OCI-LY7 (cell line): ENCODE measurements at regions of chr2 and their contacts with region 1.

Region 1: DNA sequence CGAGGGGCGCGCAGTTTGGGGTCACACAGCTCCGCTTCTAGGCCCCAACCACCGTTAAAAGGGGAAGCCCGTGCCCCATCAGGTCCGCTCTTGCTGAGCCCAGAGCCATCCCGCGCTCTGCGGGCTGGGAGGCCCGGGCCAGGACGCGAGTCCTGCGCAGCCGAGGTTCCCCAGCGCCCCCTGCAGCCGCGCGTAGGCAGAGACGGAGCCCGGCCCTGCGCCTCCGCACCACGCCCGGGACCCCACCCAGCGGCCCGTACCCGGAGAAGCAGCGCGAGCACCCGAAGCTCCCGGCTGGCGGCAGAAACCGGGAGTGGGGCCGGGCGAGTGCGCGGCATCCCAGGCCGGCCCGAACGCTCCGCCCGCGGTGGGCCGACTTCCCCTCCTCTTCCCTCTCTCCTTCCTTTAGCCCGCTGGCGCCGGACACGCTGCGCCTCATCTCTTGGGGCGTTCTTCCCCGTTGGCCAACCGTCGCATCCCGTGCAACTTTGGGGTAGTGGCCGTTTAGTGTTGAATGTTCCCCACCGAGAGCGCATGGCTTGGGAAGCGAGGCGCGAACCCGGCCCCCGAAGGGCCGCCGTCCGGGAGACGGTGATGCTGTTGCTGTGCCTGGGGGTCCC is at the start of gene ITGA4:
- DNase-seq: peak; percentile 93
- H3K4me3 ChIP-seq: peak within 1 kb of the TSS; percentile 91
- H3K27ac ChIP-seq: peak within 1 kb of the TSS; percentile 95
- H3K4me1 ChIP-seq: peaks cover 44% of the 10 kb centered on the region
- CTCF ChIP-seq: peak; percentile 85
- total RNA-seq, gene ITGA4: 55.1 and 61.8 TPM in 2 replicates

Region 2: DNA sequence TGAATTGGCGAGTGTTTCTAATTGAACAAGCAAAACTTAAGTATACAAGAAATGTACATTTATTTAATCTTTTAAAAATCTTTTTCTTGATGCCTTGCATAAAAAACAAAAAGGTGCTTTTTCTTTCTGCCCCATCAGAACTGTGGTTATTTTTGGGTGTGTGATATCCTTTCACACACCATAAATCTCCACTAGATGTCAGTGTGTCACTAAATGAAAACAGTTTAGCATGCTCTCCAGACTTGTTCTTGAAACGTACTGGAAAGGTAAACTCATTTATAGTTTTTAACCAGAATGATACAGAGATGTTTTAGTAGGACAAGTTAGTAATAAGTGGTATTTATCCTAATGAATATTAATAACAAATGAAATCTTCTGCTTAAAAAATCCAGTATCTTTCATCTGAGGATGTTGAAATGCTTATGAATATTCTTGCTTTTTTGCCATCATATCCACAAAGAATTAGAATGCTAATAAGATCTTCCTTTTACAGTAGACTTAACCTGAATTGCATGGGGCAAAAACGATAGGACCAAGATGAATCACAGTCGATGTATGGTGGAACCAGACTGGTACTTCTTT is 380.0 kb before region 1 on chr2:
- CTCF ChIA-PET with region 1: no interaction called
- POLR2A ChIA-PET with region 1: no interaction called
- intact Hi-C with region 1: loop called (anchors 5 kb)
- DNase-seq: peak; percentile 72
- H3K4me3 ChIP-seq: no peak overlapping the region
- H3K27ac ChIP-seq: no peak overlapping the region
- H3K4me1 ChIP-seq: no peaks in the 10 kb centered on the region
- CTCF ChIP-seq: peak; percentile 94

Region 3: GRCh38 chr2:181152226-181152625 is 305.0 kb before region 1 on chr2:
- CTCF ChIA-PET with region 1: interaction called, 11 read pairs
- POLR2A ChIA-PET with region 1: no interaction called
- intact Hi-C with region 1: no loop called
- DNase-seq: no peak
- H3K4me3 ChIP-seq: no peak overlapping the region
- H3K27ac ChIP-seq: no peak overlapping the region
- H3K4me1 ChIP-seq: no peaks in the 10 kb centered on the region
- CTCF ChIP-seq: no peak

Region 4: DNA sequence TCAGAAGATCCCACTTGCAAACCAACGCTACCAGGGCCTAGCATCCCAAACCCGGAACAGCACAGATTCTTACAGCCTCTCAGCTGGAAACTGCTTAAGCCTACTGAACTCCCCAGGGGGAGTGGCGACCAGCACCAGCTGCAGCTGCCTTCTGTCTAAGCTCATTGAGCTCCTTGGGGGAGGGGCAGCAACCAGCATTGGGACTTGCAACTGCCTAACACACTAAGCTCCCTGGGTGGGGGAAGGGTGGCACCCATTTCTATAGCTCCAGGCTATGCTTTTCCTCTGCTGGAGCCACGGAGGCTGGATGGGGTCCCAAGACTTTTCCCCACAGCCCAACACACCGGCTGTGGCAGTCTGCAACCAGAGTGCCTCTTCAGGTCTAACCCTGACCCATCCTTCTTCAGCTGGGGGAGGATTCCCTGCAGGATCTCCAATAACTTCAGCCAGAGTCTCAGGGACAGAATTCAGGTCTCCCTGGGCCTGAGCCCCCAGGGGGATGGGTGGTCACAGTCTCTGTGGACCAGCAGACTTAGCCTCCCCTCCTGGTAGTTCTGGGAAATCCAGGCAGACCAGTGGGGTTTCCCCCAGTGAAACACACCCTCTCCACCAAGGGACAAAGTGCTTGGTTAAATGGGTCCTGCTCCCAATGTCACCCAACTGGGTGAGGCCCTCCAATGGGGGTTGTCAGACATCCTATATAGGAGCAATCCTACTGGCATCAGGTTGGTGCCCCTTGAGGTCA is 46.0 kb before region 1 on chr2:
- CTCF ChIA-PET with region 1: interaction called, 3 read pairs
- POLR2A ChIA-PET with region 1: interaction called, 4 read pairs
- intact Hi-C with region 1: loop called (anchors 1 kb)
- DNase-seq: peak; percentile 100
- H3K4me3 ChIP-seq: peak overlapping the region; percentile 42
- H3K27ac ChIP-seq: peak overlapping the region; percentile 71
- H3K4me1 ChIP-seq: peaks cover 57% of the 10 kb centered on the region
- CTCF ChIP-seq: peak; percentile 14; the same call in 1 of the 2 replicates